Activated T-helper 1 cell treated with anti-CD3 and anti-CD28 coated beads, Interleukin-12 subunit alpha, Interleukin-12 subunit beta, Interleukin-2, Interleukin-4 antibody, amounts not matched to agents 30 ng/mL and 10 ng/mL and 1 ng/mL, durations not matched to agents 14 hours and 24 hours and 36 hours (primary cell): ENCODE measurements at regions of chr3 and their contacts with region 1.

Region 1: GRCh38 chr3:177050501-177051237 is 146.6 kb downstream of the TBL1XR1 start:
- DNase-seq: no peak
- H3K4me3 Mint-ChIP-seq: no peak overlapping the region
- H3K27ac Mint-ChIP-seq: no peak overlapping the region
- H3K4me1 Mint-ChIP-seq: peaks cover 11% of the 10 kb centered on the region
- H3K27me3 Mint-ChIP-seq: no peaks in the 10 kb centered on the region

Region 2: DNA sequence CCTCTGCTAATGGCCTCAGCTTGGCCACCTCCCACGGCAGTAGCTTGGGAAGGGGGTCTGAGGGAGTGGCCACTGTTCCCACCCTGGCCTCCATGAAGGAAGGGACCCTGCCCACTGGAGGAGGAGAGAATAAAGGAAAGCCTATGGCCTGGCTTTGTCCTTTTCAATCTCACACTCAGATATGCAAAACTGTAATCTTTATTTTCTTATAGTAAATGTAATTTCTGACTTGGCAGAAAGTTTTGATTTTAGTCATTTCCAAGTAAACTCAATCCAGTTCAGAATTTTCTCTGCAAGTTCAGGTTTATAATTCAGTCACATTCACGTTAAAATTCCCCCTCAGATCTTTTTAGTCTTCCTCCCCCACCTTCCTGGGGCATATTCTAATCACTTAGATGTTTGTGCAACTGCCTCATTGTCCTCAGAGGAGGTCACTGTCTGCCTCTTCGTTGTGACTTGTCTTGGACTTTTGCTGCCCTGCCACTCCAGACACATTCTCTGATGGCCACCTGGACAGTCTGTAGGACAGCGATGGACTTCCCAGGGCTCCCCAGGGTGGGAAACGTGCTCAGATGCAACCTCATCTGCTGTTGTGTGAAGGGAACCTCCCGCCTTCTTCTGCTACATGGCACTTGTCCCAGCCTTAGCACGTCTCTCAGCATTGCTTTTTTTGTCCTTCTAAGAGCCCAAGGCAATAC is 369.4 kb after region 1 on chr3:
- intact Hi-C with region 1: loop called (anchors 1 kb)
- DNase-seq: no peak
- H3K4me3 Mint-ChIP-seq: peak overlapping the region; percentile 19
- H3K27ac Mint-ChIP-seq: peak overlapping the region; percentile 53
- H3K4me1 Mint-ChIP-seq: peaks cover 26% of the 10 kb centered on the region
- H3K27me3 Mint-ChIP-seq: peaks cover 1% of the 10 kb centered on the region

Region 3: DNA sequence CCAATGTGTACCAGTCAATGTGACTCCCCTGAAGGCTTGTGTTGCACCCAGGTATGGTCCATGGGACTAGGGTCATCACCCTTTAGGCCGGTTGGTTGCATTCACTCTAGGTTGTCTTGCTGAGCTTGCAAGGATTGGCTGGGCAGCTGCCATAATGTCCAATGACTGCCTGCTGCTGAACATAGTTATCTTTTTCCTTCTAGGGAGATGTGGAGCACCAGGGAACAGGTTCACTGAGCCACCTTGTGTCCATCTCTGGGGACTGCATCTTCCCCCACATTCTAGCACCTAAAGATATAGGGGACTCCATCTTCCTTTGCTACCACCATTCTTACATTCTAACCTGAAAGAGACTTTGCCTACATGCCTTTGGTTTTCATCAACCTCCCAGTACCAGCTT is 727.0 kb after region 1 on chr3:
- intact Hi-C with region 1: loop called (anchors 1 kb)
- DNase-seq: no peak
- H3K4me3 Mint-ChIP-seq: no peak overlapping the region
- H3K27ac Mint-ChIP-seq: no peak overlapping the region
- H3K4me1 Mint-ChIP-seq: peaks cover 14% of the 10 kb centered on the region
- H3K27me3 Mint-ChIP-seq: no peaks in the 10 kb centered on the region

Region 4: DNA sequence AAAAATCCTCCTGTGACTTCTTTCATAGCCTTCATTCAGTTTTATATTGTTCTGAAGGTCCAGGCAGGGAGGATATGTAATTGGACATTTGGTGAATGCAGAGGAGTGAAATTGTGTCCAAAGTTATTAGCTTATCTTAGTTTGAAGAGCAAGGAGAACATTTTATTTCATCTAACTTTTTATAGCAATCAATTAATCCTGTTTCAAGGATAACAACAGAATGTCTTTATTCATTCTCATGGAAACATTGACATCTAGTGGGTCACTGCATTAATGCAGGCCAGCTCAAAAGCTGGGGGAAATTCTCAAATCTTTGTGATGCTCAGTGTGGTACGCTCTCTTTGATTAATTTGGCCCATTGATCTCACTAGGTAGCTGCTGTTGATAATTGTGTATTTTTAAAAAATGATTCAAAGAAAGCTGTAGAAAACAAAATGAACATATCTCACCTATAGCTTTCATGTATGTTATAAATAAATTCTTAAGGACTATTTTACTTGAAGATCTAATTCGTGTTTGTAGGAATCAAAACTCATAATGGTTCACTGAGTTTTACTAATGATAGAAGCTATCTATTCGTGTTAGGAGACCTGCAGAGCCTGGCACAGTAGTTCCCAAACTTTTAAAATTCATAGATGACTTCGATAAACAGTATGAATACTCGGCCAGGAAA is 1334.7 kb after region 1 on chr3:
- intact Hi-C with region 1: loop called (anchors 10 kb)
- DNase-seq: no peak
- H3K4me3 Mint-ChIP-seq: no peak overlapping the region
- H3K27ac Mint-ChIP-seq: no peak overlapping the region
- H3K4me1 Mint-ChIP-seq: no peaks in the 10 kb centered on the region
- H3K27me3 Mint-ChIP-seq: no peaks in the 10 kb centered on the region